Posterior cingulate gyrus (tissue), 11 donors: ENCODE measurements at regions of chr13 and their contacts with region 1.

Region 1: GRCh38 chr13:21176220-21176982 is at the starts of genes MRPL57 and SKA3:
- DNase-seq: peak; percentile 86 to 99 (median 91)

Region 2: DNA sequence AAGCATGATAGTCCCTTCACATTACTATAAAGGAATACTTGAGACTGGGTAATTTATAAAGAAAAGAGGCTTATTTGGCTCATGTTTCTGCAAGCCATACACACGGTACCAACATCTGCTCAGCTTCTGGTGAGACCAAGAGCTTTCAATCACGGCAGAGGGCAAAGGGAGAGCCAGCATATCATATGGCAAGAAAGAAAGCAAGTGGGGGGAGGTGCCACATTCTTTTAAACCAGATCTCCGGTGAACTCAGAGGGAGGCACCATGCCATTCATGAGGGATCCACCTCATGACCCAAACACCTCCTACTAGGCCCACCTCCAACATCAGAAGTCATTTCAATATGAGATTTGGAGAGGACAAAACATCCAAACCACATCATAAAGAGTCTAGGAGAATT is 294.2 kb before region 1 on chr13:
- intact Hi-C with region 1: no loop called
- DNase-seq: no peak

Region 3: DNA sequence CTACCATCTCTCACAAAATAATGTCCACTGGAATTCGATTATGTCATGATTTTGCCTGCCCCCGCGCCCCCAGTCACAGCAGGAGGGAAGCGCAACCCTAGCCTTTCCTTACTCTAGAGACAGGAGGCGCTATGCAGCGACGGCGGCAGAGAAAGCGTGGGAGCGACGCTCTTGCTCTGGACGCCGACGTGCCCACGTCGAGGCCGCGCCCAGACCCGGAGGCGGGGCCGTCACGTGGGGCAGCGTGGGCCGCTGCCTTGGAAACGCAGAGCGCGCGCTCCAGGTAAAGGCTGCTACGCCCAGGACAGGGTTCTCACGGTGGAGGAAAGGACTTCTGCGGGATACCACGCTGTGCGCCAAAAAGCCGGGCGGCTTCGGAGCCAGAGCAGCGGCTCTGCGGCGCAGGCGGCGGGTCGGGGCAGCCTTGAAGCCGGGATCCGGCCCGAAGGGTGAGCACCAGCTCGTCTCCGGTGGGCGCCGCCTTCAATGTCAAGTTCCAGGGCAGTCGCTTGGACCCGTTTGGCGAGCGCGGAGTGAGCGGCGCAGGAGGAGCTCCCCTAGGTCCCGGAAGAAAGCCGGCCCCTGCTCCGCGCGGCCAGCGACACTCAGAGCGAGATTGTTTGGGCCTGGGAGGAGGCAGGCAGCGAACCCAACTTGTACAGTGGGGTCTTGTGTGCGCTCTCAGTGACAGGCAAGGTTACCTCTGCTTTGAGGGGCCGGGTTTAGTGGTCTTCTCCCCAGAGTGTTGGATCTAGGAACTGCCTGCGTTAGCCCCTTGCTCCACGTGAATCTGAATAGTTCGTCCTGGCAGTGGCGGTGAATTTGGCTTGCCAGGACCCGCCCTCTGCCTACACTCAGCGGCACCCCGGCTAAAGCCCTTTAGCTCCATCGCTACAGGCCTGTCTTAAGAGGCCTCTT is 121.8 kb after region 1 on chr13:
- intact Hi-C with region 1: loop called (anchors 5 kb)
- DNase-seq: peak; percentile 77 to 98 (median 83)